Natural killer cell (primary cell): ENCODE measurements at regions of chr12 and their contacts with region 1.

Region 1: GRCh38 chr12:11500178-11500860 is 105.0 kb upstream of the PRB2 start:
- DNase-seq: peak; percentile 85 to 88
- ATAC-seq: peak; percentile 93 to 100 (median 98)
- H3K4me3 ChIP-seq: no peak overlapping the region
- H3K4me3 Mint-ChIP-seq: peak overlapping the region; percentile 25
- H3K27ac ChIP-seq: no peak overlapping the region
- H3K27ac Mint-ChIP-seq: peak overlapping the region in 1 of 2 donors; percentile 57
- H3K4me1 ChIP-seq: peaks cover 9% of the 10 kb centered on the region
- H3K4me1 Mint-ChIP-seq: peaks cover 7 to 12% of the 10 kb centered on the region in 2 donors
- H3K27me3 ChIP-seq: peaks cover 4% of the 10 kb centered on the region
- H3K27me3 Mint-ChIP-seq: peaks cover 23 to 37% of the 10 kb centered on the region in 2 donors
- CTCF ChIP-seq: no peak

Region 2: GRCh38 chr12:11108862-11109261 is 391.5 kb before region 1 on chr12:
- intact Hi-C with region 1: no loop called
- DNase-seq: no peak
- ATAC-seq: peak in 1 of 3 donors; percentile 55
- H3K4me3 ChIP-seq: no peak overlapping the region
- H3K4me3 Mint-ChIP-seq: peak overlapping the region; percentile 72
- H3K27ac ChIP-seq: no peak overlapping the region
- H3K27ac Mint-ChIP-seq: peak overlapping the region; percentile 68 to 75
- H3K4me1 ChIP-seq: peaks cover 9% of the 10 kb centered on the region
- H3K4me1 Mint-ChIP-seq: peaks cover 52 to 67% of the 10 kb centered on the region in 2 donors
- H3K27me3 ChIP-seq: no peaks in the 10 kb centered on the region
- H3K27me3 Mint-ChIP-seq: no peaks in the 10 kb centered on the region
- CTCF ChIP-seq: no peak

Region 3: DNA sequence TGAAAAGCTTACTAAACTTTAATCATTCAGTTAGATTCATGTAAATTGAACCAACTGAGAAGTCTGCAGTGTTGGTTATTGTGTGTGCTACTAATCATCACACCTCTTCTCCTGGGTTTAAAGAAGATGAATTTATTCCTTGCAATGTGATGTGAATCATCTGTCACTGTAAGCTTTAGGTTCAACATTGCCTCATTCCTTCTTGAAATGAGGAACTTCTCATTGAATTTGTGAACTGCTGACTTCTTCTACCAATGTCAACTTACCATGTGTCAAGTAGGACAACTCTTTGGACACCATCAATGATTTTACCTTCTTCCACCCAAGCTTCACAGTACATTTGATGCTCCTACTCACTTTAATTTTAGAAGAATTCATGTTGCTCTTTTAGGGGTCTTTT is 87.6 kb before region 1 on chr12:
- intact Hi-C with region 1: no loop called
- DNase-seq: no peak
- ATAC-seq: no peak
- H3K4me3 ChIP-seq: no peak overlapping the region
- H3K4me3 Mint-ChIP-seq: no peak overlapping the region
- H3K27ac ChIP-seq: no peak overlapping the region
- H3K27ac Mint-ChIP-seq: no peak overlapping the region
- H3K4me1 ChIP-seq: no peaks in the 10 kb centered on the region
- H3K4me1 Mint-ChIP-seq: no peaks in the 10 kb centered on the region
- H3K27me3 ChIP-seq: no peaks in the 10 kb centered on the region
- H3K27me3 Mint-ChIP-seq: peaks cover 0 to 13% of the 10 kb centered on the region in 2 donors
- CTCF ChIP-seq: no peak

Region 4: GRCh38 chr12:11545484-11546330 is 45.4 kb after region 1 on chr12:
- intact Hi-C with region 1: loop called (anchors 2 kb)
- DNase-seq: peak in 1 of 2 donors; percentile 79
- ATAC-seq: peak; percentile 75 to 79 (median 78)
- H3K4me3 ChIP-seq: no peak overlapping the region
- H3K4me3 Mint-ChIP-seq: peak overlapping the region; percentile 65
- H3K27ac ChIP-seq: peak overlapping the region; percentile 81
- H3K27ac Mint-ChIP-seq: peak overlapping the region; percentile 81 to 89
- H3K4me1 ChIP-seq: peaks cover 28% of the 10 kb centered on the region
- H3K4me1 Mint-ChIP-seq: peaks cover 15 to 25% of the 10 kb centered on the region in 2 donors
- H3K27me3 ChIP-seq: no peaks in the 10 kb centered on the region
- H3K27me3 Mint-ChIP-seq: peaks cover 0 to 4% of the 10 kb centered on the region in 2 donors
- CTCF ChIP-seq: no peak

Region 5: DNA sequence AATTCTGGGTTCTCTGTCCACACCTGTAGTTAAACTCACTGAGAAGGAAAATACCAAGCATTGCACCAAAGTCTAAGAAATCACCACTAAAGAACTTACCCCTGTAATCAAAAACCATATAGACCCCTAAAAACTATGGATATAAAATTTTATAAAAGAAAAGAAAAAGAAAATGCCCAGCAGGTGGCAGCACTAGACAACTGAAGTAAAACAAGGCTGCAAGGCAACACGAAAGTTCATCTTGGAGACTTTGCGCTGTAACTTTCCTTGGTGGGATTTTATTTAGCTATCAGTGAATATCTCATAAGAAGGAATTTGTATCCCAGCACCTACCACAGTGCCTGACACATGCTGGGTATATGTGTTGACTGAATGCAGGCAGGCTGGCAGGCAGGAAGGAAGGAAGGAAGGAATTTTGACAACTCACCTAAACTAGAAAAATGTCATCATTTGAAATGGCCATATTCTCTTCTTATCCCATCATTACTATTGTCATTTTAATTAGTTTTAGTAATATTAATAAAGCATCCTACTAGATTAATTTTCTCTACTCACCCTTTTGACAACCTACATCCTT is 80.9 kb after region 1 on chr12:
- intact Hi-C with region 1: no loop called
- DNase-seq: peak; percentile 47 to 86
- ATAC-seq: peak in 2 of 3 donors; percentile 34 to 41
- H3K4me3 ChIP-seq: no peak overlapping the region
- H3K4me3 Mint-ChIP-seq: no peak overlapping the region
- H3K27ac ChIP-seq: no peak overlapping the region
- H3K27ac Mint-ChIP-seq: no peak overlapping the region
- H3K4me1 ChIP-seq: no peaks in the 10 kb centered on the region
- H3K4me1 Mint-ChIP-seq: peaks cover 0 to 2% of the 10 kb centered on the region in 2 donors
- H3K27me3 ChIP-seq: no peaks in the 10 kb centered on the region
- H3K27me3 Mint-ChIP-seq: peaks cover 23 to 29% of the 10 kb centered on the region in 2 donors
- CTCF ChIP-seq: peak; percentile 83